Left cardiac atrium (tissue), 4 donors: ENCODE measurements at regions of chr4 and their contacts with region 1.

Region 1: DNA sequence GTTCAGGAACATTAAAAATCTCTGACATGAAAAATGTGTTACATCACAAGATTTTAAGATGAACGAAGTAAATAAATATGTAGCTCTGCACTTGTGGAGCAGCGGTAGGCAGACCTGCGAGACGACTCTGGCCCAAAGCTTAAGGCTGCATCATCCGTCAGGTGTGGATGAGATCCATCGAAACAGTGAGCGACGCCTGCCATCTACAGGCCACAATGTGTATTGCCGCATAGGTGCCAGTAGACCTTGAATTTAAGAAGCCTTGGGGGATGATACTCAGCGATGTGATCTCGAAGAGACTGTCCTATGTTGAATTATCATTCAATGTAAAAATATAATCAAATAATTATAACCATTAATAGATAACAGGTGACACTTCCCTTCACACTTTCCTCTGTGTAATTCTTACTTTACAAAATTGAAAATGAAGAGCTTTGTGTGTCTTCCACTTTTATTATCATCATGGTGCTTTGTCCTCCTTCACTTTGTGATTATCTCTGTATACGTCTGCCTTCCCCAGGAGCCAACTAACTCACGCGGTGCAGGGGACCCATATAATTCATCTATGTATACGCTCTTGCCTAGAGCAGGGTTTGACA is 851.0 kb downstream of the RAB28 start:
- DNase-seq: peak; percentile 73
- ATAC-seq: peak; percentile 86 to 88

Region 2: DNA sequence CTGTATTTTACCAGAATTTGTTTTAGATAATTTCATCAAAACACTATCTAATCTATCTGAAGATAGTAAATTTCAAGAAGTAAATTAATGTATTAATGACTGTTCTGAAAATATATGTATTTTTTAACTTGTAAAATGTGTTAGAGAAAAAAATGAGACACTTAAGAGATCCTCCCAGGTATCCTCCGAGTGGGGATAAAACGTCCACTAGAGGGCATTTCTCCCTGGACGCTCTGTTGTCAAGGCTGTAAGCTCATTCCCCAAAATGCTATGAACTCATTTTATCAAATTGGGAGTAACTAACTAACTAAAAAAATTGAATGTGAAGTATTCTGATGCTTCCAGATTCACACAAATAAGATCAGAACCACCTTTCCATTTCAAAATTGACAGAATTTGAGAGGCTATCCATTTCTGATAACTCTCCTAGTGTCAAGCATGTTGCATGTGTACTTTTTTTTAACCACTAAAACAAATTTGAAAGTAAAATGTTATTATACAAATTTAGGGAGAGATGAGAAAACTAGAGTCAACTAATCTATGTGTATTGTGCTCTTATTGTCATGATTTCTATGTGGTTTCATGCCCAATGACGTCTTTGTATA is 867.2 kb before region 1 on chr4:
- intact Hi-C with region 1: loop called in 1 of 2 experiments (anchors 5 kb)
- DNase-seq: no peak
- ATAC-seq: peak; percentile 43 to 61

Region 3: GRCh38 chr4:12041828-12042227 is 591.3 kb before region 1 on chr4:
- intact Hi-C with region 1: loop called (anchors 10 kb)
- DNase-seq: no peak
- ATAC-seq: peak; percentile 23 to 38

Region 4: DNA sequence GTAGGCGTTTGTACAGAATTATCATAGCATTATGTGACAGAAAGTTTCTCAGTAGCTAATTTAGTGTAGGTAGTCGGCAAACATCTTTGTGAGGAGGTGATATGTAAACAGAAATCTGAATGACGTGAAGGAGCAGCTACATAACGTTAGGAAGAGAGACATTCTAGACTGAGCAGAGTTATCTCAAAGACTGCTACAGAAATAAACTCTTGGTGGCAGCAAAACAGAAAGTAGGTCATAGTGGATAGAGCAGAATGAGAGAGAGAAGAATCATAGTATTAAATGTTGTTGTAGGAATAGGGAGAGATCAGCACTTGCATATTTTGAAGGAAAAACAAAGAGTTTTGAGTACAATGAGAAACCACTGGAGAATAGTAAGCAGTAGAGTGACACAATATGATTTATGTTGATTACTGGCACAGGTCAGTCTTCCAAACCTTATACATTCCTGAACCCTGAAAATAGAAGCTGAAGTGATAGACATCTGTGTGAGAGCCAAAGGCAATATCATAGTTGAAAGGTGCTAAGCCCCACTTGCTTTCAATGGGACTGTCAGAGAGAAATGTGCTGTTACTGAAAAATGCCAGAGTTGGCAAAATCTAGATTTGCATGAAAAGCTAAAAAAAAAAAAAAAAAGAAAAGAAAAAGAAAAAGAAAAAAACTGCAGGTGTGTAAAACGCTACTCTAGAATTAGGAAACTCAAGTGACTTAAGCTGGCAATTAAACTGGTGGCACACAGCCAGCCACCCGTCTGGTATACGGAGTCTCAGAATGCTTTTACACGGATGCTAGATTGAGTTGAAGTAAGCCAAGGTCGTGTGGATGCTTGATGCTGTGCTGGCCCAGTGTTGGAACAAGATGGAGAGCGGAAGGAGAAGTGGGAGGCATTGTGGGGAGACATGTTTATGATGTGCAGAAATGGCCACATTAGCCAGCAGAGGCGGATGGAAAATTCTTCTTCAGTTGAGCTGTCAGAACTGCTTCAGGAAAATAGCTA is 454.2 kb before region 1 on chr4:
- intact Hi-C with region 1: loop called in 1 of 2 experiments (anchors 10 kb)
- DNase-seq: peak; percentile 25
- ATAC-seq: peak; percentile 56 to 86